ENCODE measurements at regions of chr3 and their contacts with region 1.

Region 1: GRCh38 chr3:88282528-88283241 is 132.9 kb downstream of the C3orf38 start:
- DNase-seq: no peak
- H3K4me3 ChIP-seq: no peak overlapping the region
- H3K4me3 Mint-ChIP-seq: no peak overlapping the region
- H3K27ac Mint-ChIP-seq: no peak overlapping the region
- H3K4me1 ChIP-seq: no peaks in the 10 kb centered on the region
- H3K4me1 Mint-ChIP-seq: peaks cover 9% of the 10 kb centered on the region
- H3K27me3 ChIP-seq: no peaks in the 10 kb centered on the region; the same call in 1 of the 2 replicates
- H3K27me3 Mint-ChIP-seq: peaks cover 2% of the 10 kb centered on the region
- CTCF ChIP-seq: no peak

Region 2: DNA sequence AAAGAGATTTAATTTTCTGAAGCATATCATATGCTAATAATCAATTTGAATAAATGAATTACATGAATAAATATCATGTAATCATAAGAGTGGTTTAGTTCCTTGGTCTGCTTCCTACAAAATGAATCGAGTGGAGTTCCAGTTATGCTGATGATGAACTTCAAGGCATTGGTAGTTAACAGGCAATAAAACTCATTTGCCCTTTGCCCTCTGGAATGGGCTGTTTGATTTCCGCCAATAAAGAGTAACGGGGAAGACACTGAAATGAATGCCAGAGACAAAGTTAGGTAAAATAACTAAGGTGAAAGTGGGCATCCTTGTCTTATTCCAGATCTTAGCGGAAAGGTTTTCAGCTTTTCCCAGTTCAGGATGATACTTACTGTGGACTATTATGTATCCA is 42.8 kb before region 1 on chr3:
- CTCF ChIA-PET with region 1: no interaction called
- POLR2A ChIA-PET with region 1: no interaction called
- intact Hi-C with region 1: loop called (anchors 5 kb)
- DNase-seq: no peak
- H3K4me3 ChIP-seq: no peak overlapping the region
- H3K4me3 Mint-ChIP-seq: no peak overlapping the region
- H3K27ac Mint-ChIP-seq: no peak overlapping the region
- H3K4me1 ChIP-seq: no peaks in the 10 kb centered on the region
- H3K4me1 Mint-ChIP-seq: no peaks in the 10 kb centered on the region
- H3K27me3 ChIP-seq: no peaks in the 10 kb centered on the region
- H3K27me3 Mint-ChIP-seq: peaks cover 3% of the 10 kb centered on the region
- CTCF ChIP-seq: no peak

Measured in Caco-2 (cell line).